BJ (cell line): ENCODE measurements at regions of chr2 and their contacts with region 1.

Region 1: GRCh38 chr2:229920011-229920641 is 1.7 kb downstream of the TRIP12 start:
- DNase-seq: no peak
- H3K4me3 ChIP-seq: peak overlapping the region; percentile 79
- H3K27me3 ChIP-seq: no peaks in the 10 kb centered on the region
- CTCF ChIP-seq: no peak

Region 2: DNA sequence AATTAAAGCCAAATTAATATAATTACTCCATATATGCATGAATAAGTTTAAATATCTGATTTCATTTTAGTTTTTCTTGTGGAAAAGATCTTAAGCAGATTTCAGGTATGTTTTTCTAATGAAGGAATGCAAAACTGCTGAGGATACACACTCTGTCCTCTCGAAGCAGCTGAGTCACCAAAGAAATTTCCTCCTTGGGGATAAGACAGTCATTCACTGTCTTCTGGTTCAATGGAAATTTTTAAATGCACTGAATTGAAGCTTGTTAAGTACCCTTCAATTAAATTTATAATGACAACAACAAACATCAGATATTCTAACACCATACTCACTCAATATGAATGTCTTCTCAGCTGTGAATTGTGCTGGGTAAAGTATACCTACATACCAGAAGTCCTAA is 104.3 kb before region 1 on chr2:
- CTCF ChIA-PET with region 1: no interaction called
- POLR2A ChIA-PET with region 1: interaction called, 11 read pairs
- DNase-seq: no peak
- H3K4me3 ChIP-seq: no peak overlapping the region
- H3K27me3 ChIP-seq: no peaks in the 10 kb centered on the region
- CTCF ChIP-seq: no peak

Region 3: GRCh38 chr2:229870903-229871656 is 49.0 kb before region 1 on chr2:
- CTCF ChIA-PET with region 1: no interaction called
- POLR2A ChIA-PET with region 1: no interaction called
- DNase-seq: no peak
- H3K4me3 ChIP-seq: no peak overlapping the region
- H3K27me3 ChIP-seq: no peaks in the 10 kb centered on the region
- CTCF ChIP-seq: no peak

Region 4: GRCh38 chr2:230496891-230497290 is 576.8 kb after region 1 on chr2:
- CTCF ChIA-PET with region 1: no interaction called
- POLR2A ChIA-PET with region 1: no interaction called
- DNase-seq: no peak
- H3K4me3 ChIP-seq: no peak overlapping the region
- H3K27me3 ChIP-seq: no peaks in the 10 kb centered on the region
- CTCF ChIP-seq: no peak